ENCODE measurements at regions of chr20 and their contacts with region 1.

Region 1: DNA sequence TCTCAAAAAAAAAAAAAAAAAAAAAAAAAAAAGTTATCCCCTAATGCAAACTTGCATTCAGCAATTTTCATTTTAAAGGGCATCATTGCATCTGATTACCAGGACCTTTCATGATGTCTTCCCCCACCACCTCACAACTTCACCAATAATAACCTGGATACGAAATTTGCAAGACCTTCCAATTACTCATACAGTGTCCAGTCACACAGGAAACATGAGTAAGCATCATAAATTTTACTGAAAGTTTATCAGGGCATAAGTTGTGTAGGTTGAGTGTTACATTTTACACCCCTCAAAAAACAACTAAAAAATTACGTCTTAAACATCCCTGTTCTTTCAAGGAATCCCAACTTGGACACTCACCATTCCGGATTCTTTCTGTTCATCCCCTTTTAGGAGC is 79.1 kb upstream of the ANKEF1 start:
- DNase-seq: no peak
- H3K4me3 ChIP-seq: no peak overlapping the region
- H3K27ac ChIP-seq: no peak overlapping the region
- H3K4me1 ChIP-seq: no peaks in the 10 kb centered on the region
- H3K27me3 ChIP-seq: no peaks in the 10 kb centered on the region
- CTCF ChIP-seq: no peak
- EP300 ChIP-seq: no peak
- POLR2A ChIP-seq: no peak

Region 2: GRCh38 chr20:10322073-10323012 is 366.7 kb after region 1 on chr20:
- intact Hi-C with region 1: loop called (anchors 10 kb)
- DNase-seq: no peak
- H3K4me3 ChIP-seq: no peak overlapping the region
- H3K27ac ChIP-seq: no peak overlapping the region
- H3K4me1 ChIP-seq: no peaks in the 10 kb centered on the region
- H3K27me3 ChIP-seq: no peaks in the 10 kb centered on the region
- CTCF ChIP-seq: no peak
- EP300 ChIP-seq: no peak
- POLR2A ChIP-seq: no peak